ENCODE measurements at regions of chr5 and their contacts with region 1.

Region 1: GRCh38 chr5:53008751-53009150 is 19.6 kb downstream of the ITGA2 start:
- DNase-seq: peak; percentile 73
- H3K4me3 Mint-ChIP-seq: no peak overlapping the region
- H3K27ac Mint-ChIP-seq: peak overlapping the region; percentile 55
- H3K4me1 Mint-ChIP-seq: peaks cover 61% of the 10 kb centered on the region
- H3K27me3 Mint-ChIP-seq: peaks cover 4% of the 10 kb centered on the region

Region 2: GRCh38 chr5:52961274-52961681 is 47.5 kb before region 1 on chr5:
- CTCF ChIA-PET with region 1: no interaction called
- POLR2A ChIA-PET with region 1: no interaction called
- intact Hi-C with region 1: no loop called
- DNase-seq: no peak
- H3K4me3 Mint-ChIP-seq: no peak overlapping the region
- H3K27ac Mint-ChIP-seq: no peak overlapping the region
- H3K4me1 Mint-ChIP-seq: no peaks in the 10 kb centered on the region
- H3K27me3 Mint-ChIP-seq: peaks cover 3% of the 10 kb centered on the region

Region 3: GRCh38 chr5:52989781-52990527 is 18.8 kb before region 1 on chr5:
- CTCF ChIA-PET with region 1: no interaction called
- POLR2A ChIA-PET with region 1: no interaction called
- intact Hi-C with region 1: loop called (anchors 1 kb)
- DNase-seq: peak; percentile 55
- H3K4me3 Mint-ChIP-seq: peak overlapping the region; percentile 73
- H3K27ac Mint-ChIP-seq: no peak overlapping the region
- H3K4me1 Mint-ChIP-seq: peaks cover 26% of the 10 kb centered on the region
- H3K27me3 Mint-ChIP-seq: peaks cover 9% of the 10 kb centered on the region

Region 4: DNA sequence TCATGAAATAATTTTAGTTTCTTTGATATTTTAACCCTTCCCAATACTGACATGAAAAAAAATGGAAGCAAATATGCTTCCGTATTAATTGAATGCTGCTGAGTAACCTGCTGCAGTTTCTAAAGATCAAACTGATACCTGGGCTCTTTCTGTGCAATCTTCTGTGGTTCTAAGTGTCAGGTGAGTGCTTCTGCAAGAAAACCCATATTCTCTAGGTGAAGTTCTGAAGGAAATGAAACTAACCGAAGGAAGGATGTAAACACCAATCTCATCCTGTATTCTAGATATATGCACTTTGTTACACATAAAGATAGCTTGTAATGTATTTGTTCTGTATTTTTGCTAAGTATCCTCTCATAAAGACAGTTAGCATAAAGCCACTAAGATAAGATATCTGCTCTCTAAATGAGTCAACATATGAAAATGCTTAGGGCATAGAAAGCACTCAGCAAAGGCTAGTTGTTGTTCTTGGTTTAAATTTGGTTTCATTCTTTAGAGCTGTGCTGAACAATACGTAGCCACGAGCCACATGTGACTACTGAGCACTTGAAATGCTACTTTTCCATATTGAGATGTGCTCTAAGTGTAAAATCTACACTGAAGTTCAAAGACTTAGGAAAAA is 32.4 kb after region 1 on chr5:
- CTCF ChIA-PET with region 1: interaction called, 5 read pairs
- POLR2A ChIA-PET with region 1: no interaction called
- intact Hi-C with region 1: loop called (anchors 1 kb)
- DNase-seq: peak; percentile 32
- H3K4me3 Mint-ChIP-seq: peak overlapping the region; percentile 25
- H3K27ac Mint-ChIP-seq: no peak overlapping the region
- H3K4me1 Mint-ChIP-seq: peaks cover 42% of the 10 kb centered on the region
- H3K27me3 Mint-ChIP-seq: peaks cover 7% of the 10 kb centered on the region

Region 5: DNA sequence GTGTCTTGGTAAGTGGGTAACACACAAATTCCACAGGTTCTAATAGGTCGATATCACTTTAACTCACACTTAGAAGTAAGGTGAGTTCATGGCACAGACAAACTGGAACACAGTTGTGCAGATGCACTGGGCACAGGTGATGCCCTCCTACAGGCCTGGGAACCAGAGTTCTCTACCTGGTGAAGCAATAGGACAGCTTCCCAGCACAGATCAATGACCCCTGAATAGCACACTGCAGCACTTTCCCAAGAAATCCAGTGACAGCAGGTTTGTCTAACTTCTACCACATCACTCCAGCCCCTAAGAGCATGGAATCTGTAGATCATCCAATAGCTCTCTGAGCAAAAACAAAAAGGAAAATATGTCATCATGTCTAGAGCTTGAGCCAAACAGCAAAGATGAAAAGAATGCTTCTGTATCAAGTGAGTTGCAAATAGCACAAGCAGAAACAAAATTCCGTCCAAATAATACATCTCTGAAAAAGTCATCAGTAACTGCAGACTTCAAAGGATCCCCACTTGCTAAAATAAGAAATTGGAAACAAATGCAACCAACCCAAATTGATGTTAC is 67.3 kb after region 1 on chr5:
- CTCF ChIA-PET with region 1: no interaction called
- POLR2A ChIA-PET with region 1: no interaction called
- intact Hi-C with region 1: no loop called
- DNase-seq: no peak
- H3K4me3 Mint-ChIP-seq: no peak overlapping the region
- H3K27ac Mint-ChIP-seq: no peak overlapping the region
- H3K4me1 Mint-ChIP-seq: peaks cover 9% of the 10 kb centered on the region
- H3K27me3 Mint-ChIP-seq: peaks cover 7% of the 10 kb centered on the region

Region 6: GRCh38 chr5:53089345-53089991 is 80.7 kb after region 1 on chr5:
- CTCF ChIA-PET with region 1: interaction called, 6 read pairs
- POLR2A ChIA-PET with region 1: interaction called, 4 read pairs
- intact Hi-C with region 1: loop called (anchors 1 kb)
- DNase-seq: no peak
- H3K4me3 Mint-ChIP-seq: peak overlapping the region; percentile 14
- H3K27ac Mint-ChIP-seq: peak overlapping the region; percentile 5
- H3K4me1 Mint-ChIP-seq: peaks cover 24% of the 10 kb centered on the region
- H3K27me3 Mint-ChIP-seq: no peaks in the 10 kb centered on the region

Region 7: GRCh38 chr5:53303105-53303504 is 294.4 kb after region 1 on chr5:
- CTCF ChIA-PET with region 1: no interaction called
- POLR2A ChIA-PET with region 1: no interaction called
- intact Hi-C with region 1: loop called (anchors 1 kb)
- DNase-seq: no peak
- H3K4me3 Mint-ChIP-seq: no peak overlapping the region
- H3K27ac Mint-ChIP-seq: no peak overlapping the region
- H3K4me1 Mint-ChIP-seq: peaks cover 7% of the 10 kb centered on the region
- H3K27me3 Mint-ChIP-seq: peaks cover 3% of the 10 kb centered on the region

Measured in activated CD4-positive, alpha-beta memory T cell treated with anti-CD3 and anti-CD28 coated beads for 36 hours (primary cell).